K562 (cell line): ENCODE measurements at regions of chr12 and their contacts with region 1.

Region 1: GRCh38 chr12:57771708-57772428 is at the start of gene METTL1:
- DNase-seq: peak; percentile 90 to 99 (median 92)
- ATAC-seq: peak; percentile 95
- H3K4me3 ChIP-seq: peak within 1 kb of the TSS; percentile 71
- H3K27ac ChIP-seq: peak within 1 kb of the TSS; percentile 93
- H3K4me1 ChIP-seq: peaks cover 22 to 29% of the 10 kb centered on the region in 2 experiments
- H3K27me3 ChIP-seq: no peaks in the 10 kb centered on the region
- CTCF ChIP-seq: no peak
- EP300 ChIP-seq: no peak
- POLR2A ChIP-seq: peak; percentile 97
- RAD21 ChIP-seq: no peak
- polyA plus RNA-seq, gene METTL1: 52.9 to 65.9 TPM

Region 2: DNA sequence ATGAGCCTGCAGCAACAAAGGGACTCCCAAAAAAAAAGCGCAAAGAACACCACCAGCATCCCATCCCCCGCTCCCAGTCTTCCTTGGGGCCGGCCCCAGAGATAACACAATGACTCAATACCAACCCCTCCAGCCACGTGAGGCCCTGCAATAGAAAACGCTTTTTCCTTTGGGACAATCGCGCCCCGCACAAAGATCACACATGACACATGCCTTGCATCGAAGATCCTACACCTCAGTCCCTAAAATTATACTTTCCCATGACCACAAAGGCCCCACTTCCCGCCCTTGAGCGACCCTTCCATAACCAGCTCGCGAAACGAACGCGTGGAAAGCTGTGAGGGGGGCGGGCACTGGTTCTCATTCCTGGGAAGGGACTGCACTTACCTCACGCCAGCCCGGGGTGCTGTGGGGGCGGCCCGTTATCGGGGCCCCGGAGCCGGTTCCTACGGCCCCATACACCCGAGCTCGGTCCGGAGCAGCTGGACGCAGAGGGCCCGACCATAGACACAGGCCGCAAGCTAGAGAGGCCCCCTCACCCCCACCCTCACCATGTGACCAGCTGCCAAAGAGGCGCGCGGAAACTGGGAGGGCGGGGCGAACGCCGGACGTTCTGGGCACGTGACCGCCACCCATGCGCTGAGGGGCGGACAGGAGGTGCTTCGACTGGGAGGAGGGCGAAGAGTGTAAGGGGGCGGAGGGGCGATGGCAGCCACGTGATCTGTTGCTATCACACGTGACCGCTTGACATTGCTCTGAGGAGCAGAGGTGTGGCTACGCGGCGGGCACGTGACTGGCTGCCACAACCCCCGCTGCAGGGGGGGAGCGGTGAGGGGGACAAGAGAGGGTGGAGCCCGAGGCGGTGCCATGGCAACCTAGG is 19.8 kb before region 1 on chr12 and contains the start of gene CDK4:
- CTCF ChIA-PET with region 1: no interaction called
- POLR2A ChIA-PET with region 1: interaction called, 26 read pairs
- in situ Hi-C with region 1: no loop called
- intact Hi-C with region 1: loop called (anchors 2 kb)
- DNase-seq: peak; percentile 92 to 99 (median 96)
- ATAC-seq: peak; percentile 86
- H3K4me3 ChIP-seq: peak within 1 kb of the TSS; percentile 66
- H3K27ac ChIP-seq: peak within 1 kb of the TSS; percentile 96
- H3K4me1 ChIP-seq: peaks cover 34 to 40% of the 10 kb centered on the region in 2 experiments
- H3K27me3 ChIP-seq: no peaks in the 10 kb centered on the region
- CTCF ChIP-seq: no peak; a peak in 1 of 6 replicates
- EP300 ChIP-seq: peak; percentile 75
- POLR2A ChIP-seq: peak; percentile 90
- RAD21 ChIP-seq: 0 out of 4 replicates have a peak, but pooled peaks of 1 of the 2 experiments have one; percentile 1
- polyA plus RNA-seq, gene CDK4: 37.8 to 62.8 TPM

Region 3: DNA sequence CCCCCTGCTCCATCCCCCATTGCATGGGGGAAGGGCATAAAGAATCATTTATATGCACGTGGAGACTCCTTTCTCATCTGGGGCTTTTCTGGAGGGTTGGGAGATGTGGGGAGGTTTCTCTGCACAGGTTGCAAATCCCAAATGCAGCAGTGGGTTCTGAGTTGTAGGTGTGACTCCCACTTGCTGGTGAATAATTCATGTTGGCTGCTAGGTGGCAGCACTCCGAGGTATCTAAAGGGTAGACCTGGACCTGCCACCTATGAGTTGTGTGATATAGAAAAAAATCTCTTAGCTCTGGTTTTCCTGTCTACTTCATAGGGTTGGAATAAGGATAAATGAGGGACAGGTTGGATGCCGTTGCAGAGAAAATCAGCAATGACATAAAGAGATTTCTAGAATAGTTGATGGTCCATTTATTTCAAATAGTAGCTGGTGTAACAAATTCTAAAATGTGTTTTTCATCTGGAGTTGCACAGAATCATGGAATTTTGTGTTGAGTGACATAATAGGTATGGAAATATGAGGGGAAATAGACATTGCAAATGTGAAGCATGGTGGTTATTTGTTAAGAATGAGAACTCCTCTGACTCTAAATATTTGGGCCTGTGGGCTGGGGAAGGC is 12.4 kb before region 1 on chr12:
- CTCF ChIA-PET with region 1: no interaction called
- POLR2A ChIA-PET with region 1: interaction called, 26 read pairs
- in situ Hi-C with region 1: no loop called
- intact Hi-C with region 1: no loop called
- DNase-seq: peak in 2 of 4 experiments; percentile 37 to 58
- ATAC-seq: peak; percentile 37
- H3K4me3 ChIP-seq: no peak overlapping the region
- H3K27ac ChIP-seq: no peak overlapping the region
- H3K4me1 ChIP-seq: peaks cover 10 to 24% of the 10 kb centered on the region in 2 experiments; a peak in 4 of 5 replicates
- H3K27me3 ChIP-seq: no peaks in the 10 kb centered on the region
- CTCF ChIP-seq: peak; percentile 50 to 65 (median 59); a peak in 5 of 6 replicates
- EP300 ChIP-seq: no peak
- POLR2A ChIP-seq: no peak
- RAD21 ChIP-seq: 0 out of 4 replicates have a peak, but pooled peaks of 1 of the 2 experiments have one; percentile 8